Heart left ventricle (tissue), 16 donors: ENCODE measurements at regions of chr22 and their contacts with region 1.

Region 1: DNA sequence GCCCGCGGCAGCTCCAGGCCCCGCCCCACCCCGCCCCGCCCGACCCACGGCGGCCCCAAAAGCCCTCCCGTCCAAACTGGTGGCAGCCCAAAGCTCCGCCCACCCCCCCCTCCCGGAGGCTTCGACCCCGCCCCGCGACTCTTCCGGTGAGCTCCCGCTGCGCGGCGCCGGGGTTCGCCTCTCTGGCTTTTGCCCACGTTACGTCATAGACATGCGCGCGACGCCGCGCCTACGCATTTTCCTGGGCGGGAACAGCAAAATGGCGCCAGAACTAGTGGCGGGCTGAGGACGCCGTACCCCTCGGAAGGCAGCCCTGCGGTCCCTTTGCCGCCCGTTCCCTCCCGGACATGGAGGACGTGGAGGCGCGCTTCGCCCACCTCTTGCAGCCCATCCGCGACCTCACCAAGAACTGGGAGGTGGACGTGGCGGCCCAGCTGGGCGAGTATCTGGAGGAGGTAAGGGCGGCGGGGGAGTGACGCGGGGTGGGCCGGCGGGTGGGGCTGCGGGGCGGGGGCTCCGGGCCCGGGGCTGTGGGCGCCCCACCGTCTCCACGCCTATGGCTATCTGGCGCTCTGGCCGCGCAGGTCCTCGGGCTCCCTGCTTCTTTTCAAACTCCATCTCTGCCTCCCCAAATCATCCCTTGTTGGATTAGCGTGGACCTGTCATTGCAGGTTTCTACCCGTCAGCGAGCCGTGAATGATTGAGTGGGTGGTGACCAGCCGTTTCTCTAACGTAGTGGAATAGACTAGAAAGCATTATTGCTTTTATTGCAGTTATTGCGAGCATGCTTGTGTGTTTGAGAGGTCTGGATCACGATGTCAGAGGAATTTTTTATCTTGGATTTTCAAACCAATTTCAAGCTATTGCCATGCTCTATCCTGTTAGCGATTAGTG is at the start of gene NCAPH2:
- DNase-seq: peak; percentile 95 to 99 (median 97)
- ATAC-seq: peak; percentile 60 to 86 (median 78)
- H3K4me3 ChIP-seq: peak within 1 kb of the TSS; percentile 80 to 100 (median 96)
- H3K27ac ChIP-seq: peak within 1 kb of the TSS; percentile 86 to 98 (median 93)
- H3K4me1 ChIP-seq: peaks cover 8 to 31% (median 23%) of the 10 kb centered on the region in 12 donors
- H3K27me3 ChIP-seq: no peaks in the 10 kb centered on the region
- CTCF ChIP-seq: peak in 1 of 12 donors; percentile 23
- POLR2A ChIP-seq: peak in 1 of 2 donors; percentile 71
- total RNA-seq, gene NCAPH2: 24.7 to 34.5 (median 27.9) TPM

Region 2: GRCh38 chr22:50244420-50245213 is 263.6 kb before region 1 on chr22 and contains the start of gene TUBGCP6:
- intact Hi-C with region 1: loop called in 1 of 10 experiments (anchors 10 kb)
- DNase-seq: peak; percentile 96 to 98 (median 96)
- ATAC-seq: peak; percentile 88 to 96 (median 93)
- H3K4me3 ChIP-seq: peak within 1 kb of the TSS; percentile 51 to 99 (median 88)
- H3K27ac ChIP-seq: peak within 1 kb of the TSS; percentile 72 to 96 (median 88)
- H3K4me1 ChIP-seq: peaks cover 13 to 62% (median 44%) of the 10 kb centered on the region in 12 donors
- H3K27me3 ChIP-seq: no peaks in the 10 kb centered on the region
- CTCF ChIP-seq: peak in 7 of 12 donors; percentile 6 to 39 (median 24)
- POLR2A ChIP-seq: peak in 1 of 2 donors; percentile 81
- total RNA-seq, gene TUBGCP6: 14.1 to 28.8 (median 18.1) TPM

Region 3: DNA sequence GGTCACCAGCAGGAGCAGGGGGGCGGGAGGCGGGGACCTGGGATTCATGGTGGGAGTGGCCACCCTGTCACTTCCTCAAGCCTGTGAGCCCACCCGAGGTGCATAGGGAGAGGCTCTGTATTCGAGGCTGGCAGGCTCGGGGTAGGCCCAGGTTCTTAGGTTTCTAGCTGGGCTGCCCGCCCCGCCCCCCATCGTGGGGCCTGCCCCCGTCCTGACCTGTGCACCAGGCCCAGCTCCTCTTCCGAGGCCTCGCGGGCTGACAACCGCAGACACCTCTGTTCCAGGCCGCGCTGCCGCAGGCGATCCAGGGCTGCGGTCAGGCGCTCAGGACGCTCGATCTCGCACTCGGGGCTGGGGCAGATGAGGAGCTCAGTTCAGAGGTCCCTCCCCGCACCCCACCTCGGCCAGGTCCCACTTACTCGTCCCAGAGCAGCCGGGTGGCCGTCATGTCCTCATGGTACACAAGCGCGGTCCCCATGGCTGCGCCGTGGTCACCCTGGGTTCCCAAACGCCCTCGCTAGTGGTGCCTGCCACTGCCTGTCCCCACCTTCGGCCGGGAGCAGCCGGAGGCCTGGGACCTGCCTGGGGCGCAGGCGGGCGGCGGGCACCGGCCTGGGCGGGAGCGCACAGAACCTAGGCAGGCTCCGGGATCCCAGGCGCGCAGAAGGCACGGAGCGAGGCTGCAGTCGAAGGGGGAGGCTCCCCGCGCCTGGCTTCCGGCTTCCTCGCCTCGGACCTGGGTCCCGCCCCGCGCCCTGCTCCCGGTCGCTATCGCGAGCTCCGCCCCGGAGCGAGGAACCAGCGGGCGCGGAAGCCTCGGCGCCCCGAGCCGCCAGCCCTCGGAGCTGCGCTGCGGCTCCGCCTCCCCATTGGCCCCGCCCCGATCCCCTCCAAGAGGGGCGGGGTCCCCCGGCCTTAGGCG is 257.4 kb before region 1 on chr22 and contains the start of gene HDAC10:
- intact Hi-C with region 1: loop called in 3 of 10 experiments (anchors 10 kb)
- DNase-seq: peak; percentile 75 to 94 (median 85)
- ATAC-seq: peak; percentile 25 to 80 (median 72)
- H3K4me3 ChIP-seq: peak within 1 kb of the TSS; percentile 53 to 83 (median 69)
- H3K27ac ChIP-seq: peak within 1 kb of the TSS in 11 of 12 donors; percentile 53 to 81 (median 65)
- H3K4me1 ChIP-seq: peaks cover 5 to 43% (median 27%) of the 10 kb centered on the region in 12 donors
- H3K27me3 ChIP-seq: no peaks in the 10 kb centered on the region
- CTCF ChIP-seq: no peak
- POLR2A ChIP-seq: peak in 1 of 2 donors; percentile 60
- total RNA-seq, gene HDAC10: 6.8 to 22.4 (median 10.9) TPM

Region 4: DNA sequence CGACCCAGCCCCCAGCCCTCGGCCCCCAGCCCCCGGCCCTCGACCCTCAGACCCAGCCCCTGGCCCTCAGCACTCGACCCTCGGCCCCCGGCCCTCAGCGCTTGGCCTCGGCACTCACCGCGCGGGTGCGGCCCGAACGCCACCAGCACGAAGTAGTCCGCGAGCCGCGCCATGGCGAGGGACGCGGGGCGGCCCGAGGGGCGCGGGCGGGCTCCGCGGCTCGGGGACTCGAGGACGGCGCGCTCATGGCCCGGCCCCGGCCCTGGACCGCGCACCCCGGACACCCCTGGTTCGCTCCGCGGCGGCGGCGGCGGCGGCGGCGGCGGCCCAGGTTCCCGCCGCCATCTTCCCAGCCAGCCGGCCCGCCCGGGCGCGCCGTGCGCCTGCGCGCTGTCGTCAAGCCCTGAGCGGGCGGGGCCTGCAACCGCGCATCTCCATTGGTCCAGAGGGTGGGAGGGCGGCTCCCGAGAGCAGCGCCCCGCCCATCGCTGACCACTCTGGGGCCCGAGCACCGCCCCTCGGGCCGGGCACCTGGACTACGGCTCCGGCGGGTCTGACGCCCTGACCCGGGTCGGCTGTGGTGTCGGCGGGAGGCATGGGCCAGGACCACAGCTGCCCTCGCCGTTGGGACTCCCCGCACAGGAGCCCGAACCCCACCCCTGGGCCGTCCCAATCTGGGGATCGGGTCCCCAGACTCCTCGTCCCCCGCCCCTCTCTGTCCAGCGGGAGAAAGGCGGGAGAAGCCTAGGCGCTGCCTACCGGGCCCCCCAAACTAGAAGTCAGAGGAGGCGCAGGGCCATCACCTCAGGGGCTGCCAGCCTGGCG is 33.4 kb before region 1 on chr22 and contains the start of gene SBF1:
- intact Hi-C with region 1: loop called in 1 of 10 experiments (anchors 2 kb)
- DNase-seq: peak; percentile 93 to 97 (median 95)
- ATAC-seq: peak; percentile 97 to 99 (median 98)
- H3K4me3 ChIP-seq: peak within 1 kb of the TSS; percentile 78 to 93 (median 87)
- H3K27ac ChIP-seq: peak within 1 kb of the TSS in 11 of 12 donors; percentile 23 to 87 (median 71)
- H3K4me1 ChIP-seq: peaks cover 0 to 49% (median 47%) of the 10 kb centered on the region in 12 donors
- H3K27me3 ChIP-seq: peaks cover 0 to 10% (median 2%) of the 10 kb centered on the region in 9 donors
- CTCF ChIP-seq: no peak
- POLR2A ChIP-seq: peak; percentile 54 to 85
- total RNA-seq, gene SBF1: 44.9 to 91.8 (median 63.2) TPM

Region 5: DNA sequence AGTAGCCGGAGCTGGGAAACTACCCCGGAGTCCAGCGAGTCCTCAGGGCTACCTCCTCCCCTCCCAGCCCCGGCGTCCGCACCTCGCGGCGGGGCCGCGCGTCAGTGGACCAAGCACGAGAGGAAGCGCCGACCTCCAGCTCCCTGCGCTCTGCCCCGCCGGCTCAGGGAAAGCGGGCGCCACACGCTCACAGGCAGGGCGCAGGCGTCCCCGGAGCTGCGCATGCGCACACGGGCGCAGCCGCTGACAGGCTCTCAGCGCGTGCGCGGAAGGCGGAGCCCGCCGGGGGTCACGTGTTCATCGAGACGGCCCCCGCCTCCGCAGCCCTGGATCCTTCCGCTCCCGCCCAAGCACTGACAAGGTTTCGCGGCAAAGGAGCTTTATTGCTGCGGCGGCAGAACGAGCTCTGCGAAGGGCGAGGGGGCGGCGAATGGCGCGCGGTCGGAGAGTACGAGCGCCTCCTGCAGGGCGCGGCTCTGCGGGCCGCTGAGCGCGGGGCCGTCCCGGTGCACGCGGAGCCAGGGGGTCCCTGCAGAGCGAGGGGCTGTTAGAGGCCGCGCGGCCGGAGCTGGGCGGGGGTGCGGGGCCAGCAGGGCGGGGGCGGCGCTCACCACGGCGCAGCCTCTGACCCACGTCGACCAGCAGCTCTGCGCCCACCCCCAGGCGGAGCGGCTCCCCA is 17.3 kb after region 1 on chr22 and contains the start of gene SCO2:
- intact Hi-C with region 1: loop called in 2 of 10 experiments (anchors 1 to 2 kb)
- DNase-seq: peak; percentile 97 to 99 (median 97)
- ATAC-seq: peak; percentile 68 to 75 (median 72)
- H3K4me3 ChIP-seq: peak within 1 kb of the TSS; percentile 47 to 89 (median 74)
- H3K27ac ChIP-seq: peak within 1 kb of the TSS; percentile 83 to 99 (median 94)
- H3K4me1 ChIP-seq: peaks cover 0 to 52% (median 30%) of the 10 kb centered on the region in 12 donors
- H3K27me3 ChIP-seq: peaks cover 0 to 14% (median 0%) of the 10 kb centered on the region in 9 donors
- CTCF ChIP-seq: peak in 11 of 12 donors; percentile 14 to 56 (median 32)
- POLR2A ChIP-seq: peak in 1 of 2 donors; percentile 87
- total RNA-seq, gene SCO2: 0.67 to 2.6 (median 0.94) TPM in 4 of 9 donors, not detected in the others

Region 6: DNA sequence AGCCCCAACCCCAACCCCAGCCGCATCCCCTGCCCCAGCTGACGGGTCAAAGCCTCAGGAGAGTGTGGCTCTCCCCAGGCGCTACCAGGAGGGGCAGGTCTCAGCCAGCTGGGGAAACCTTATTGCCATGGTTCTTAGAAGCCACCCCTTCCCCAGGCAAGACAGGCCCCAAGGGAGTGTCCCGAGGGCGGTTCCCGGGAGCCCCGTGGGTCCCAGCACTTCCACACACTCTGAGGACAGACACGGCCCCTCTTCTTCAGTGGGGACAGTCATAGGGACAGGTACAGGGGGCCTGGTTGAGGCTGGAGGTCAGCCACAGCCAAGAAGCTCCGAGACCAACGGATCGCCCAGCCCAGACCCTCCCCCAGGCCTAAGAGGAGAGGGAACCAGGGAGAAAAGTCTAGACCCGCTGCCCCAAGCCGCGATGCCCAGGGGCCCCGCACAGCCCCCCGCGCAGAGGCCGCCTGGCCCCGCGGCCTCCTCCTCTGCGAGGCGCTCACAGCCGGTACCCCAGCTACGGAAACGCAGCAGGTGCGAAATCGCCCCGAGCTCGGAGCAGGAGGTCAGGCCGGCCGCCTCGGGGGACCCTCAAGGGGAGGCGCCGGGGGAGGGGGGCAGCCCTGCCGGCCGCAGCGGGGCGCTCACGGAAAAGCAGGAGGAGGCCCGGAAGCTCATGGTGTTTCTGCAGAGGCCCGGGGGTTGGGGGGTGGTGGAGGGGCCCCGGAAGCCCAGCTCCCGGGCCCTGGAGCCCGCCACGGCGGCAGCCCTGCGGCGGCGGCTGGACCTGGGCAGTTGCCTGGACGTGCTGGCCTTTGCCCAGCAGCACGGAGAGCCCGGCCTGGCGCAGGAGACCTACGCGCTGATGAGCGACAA is 40.0 kb after region 1 on chr22:
- intact Hi-C with region 1: no loop called
- DNase-seq: peak in 1 of 5 donors; percentile 67
- ATAC-seq: peak in 2 of 4 donors; percentile 6 to 8
- H3K4me3 ChIP-seq: peak overlapping the region in 10 of 12 donors; percentile 16 to 65 (median 36)
- H3K27ac ChIP-seq: peak overlapping the region in 1 of 12 donors; percentile 74
- H3K4me1 ChIP-seq: peaks cover 0 to 58% (median 17%) of the 10 kb centered on the region in 12 donors
- H3K27me3 ChIP-seq: peaks cover 24 to 83% (median 36%) of the 10 kb centered on the region in 9 donors
- CTCF ChIP-seq: peak in 1 of 12 donors; percentile 8
- POLR2A ChIP-seq: no peak

Region 7: DNA sequence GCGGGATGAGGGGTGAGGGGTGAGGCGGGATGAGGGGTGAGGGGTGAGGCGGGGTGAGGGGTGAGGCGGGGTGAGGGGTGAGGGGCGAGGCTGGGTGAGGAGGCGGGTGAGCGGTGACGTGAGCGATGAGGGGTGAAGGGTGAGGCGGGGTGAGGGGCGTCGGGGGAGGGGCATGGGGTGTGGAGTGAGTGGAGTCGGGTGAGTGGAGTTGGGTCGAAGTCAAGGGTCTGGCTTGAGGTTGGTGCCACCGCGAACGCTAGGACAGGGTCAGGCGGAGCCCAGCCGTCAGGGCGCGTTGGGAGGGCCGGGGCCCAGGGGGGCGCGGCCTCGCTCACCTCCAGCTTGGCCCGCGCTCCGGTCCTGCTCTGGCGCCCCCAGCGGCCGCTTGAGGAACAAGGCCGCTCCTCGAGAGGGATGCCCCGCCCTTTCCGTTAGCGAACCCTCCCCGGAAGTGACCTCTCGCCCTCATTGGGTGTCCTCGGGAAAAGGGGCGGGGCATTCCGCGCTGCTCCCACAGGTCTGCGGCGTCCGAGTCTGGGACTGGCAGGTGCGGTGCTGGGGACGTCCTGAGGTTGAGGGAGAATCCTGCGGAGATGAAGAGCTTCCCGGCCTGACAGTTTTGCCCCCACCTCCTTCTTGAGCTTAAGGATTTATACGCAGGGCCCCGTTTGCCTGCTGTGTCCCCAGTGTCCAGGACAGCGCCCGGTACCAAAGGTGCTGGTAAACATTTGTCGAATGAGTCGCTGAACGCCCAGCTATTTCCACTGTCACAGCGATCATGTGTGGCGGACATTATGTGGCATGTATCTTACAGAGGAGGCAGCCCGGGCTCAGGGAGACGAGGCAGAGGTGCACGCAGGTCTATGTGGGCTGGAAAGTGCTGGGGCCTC is 54.5 kb after region 1 on chr22 and contains the start of gene SYCE3:
- intact Hi-C with region 1: loop called in 1 of 10 experiments (anchors 5 kb)
- DNase-seq: peak; percentile 97 to 99 (median 98)
- ATAC-seq: peak; percentile 94 to 97 (median 96)
- H3K4me3 ChIP-seq: peak within 1 kb of the TSS; percentile 30 to 97 (median 64)
- H3K27ac ChIP-seq: peak within 1 kb of the TSS; percentile 65 to 96 (median 86)
- H3K4me1 ChIP-seq: peaks cover 0 to 17% (median 7%) of the 10 kb centered on the region in 12 donors
- H3K27me3 ChIP-seq: no peaks in the 10 kb centered on the region
- CTCF ChIP-seq: peak; percentile 92 to 100 (median 98)
- POLR2A ChIP-seq: peak; percentile 51 to 86
- total RNA-seq, gene SYCE3: not detected

Region 8: GRCh38 chr22:50582562-50583293 is 74.5 kb after region 1 on chr22 and contains the start of gene CHKB:
- intact Hi-C with region 1: loop called in 1 of 10 experiments (anchors 5 kb)
- DNase-seq: peak; percentile 99 to 100 (median 99)
- ATAC-seq: peak; percentile 94 to 97 (median 96)
- H3K4me3 ChIP-seq: peak within 1 kb of the TSS; percentile 56 to 95 (median 80)
- H3K27ac ChIP-seq: peak within 1 kb of the TSS; percentile 90 to 100 (median 99)
- H3K4me1 ChIP-seq: peaks cover 3 to 50% (median 32%) of the 10 kb centered on the region in 12 donors
- H3K27me3 ChIP-seq: no peaks in the 10 kb centered on the region
- CTCF ChIP-seq: no peak
- POLR2A ChIP-seq: peak; percentile 91 to 99
- total RNA-seq, gene CHKB: 23.3 to 54.6 (median 35.6) TPM